Activated CD4-positive, alpha-beta T cell treated with anti-CD3 and anti-CD28 coated beads for 36 hours (primary cell): ENCODE measurements at regions of chr11 and their contacts with region 1.

Region 1: GRCh38 chr11:9137293-9138132 is 46.1 kb upstream of the SCUBE2 start:
- DNase-seq: peak; percentile 86
- ATAC-seq: peak; percentile 88
- H3K4me3 Mint-ChIP-seq: no peak overlapping the region
- H3K27ac Mint-ChIP-seq: peak overlapping the region; percentile 79
- H3K4me1 Mint-ChIP-seq: peaks cover 35% of the 10 kb centered on the region
- H3K27me3 Mint-ChIP-seq: no peaks in the 10 kb centered on the region

Region 2: DNA sequence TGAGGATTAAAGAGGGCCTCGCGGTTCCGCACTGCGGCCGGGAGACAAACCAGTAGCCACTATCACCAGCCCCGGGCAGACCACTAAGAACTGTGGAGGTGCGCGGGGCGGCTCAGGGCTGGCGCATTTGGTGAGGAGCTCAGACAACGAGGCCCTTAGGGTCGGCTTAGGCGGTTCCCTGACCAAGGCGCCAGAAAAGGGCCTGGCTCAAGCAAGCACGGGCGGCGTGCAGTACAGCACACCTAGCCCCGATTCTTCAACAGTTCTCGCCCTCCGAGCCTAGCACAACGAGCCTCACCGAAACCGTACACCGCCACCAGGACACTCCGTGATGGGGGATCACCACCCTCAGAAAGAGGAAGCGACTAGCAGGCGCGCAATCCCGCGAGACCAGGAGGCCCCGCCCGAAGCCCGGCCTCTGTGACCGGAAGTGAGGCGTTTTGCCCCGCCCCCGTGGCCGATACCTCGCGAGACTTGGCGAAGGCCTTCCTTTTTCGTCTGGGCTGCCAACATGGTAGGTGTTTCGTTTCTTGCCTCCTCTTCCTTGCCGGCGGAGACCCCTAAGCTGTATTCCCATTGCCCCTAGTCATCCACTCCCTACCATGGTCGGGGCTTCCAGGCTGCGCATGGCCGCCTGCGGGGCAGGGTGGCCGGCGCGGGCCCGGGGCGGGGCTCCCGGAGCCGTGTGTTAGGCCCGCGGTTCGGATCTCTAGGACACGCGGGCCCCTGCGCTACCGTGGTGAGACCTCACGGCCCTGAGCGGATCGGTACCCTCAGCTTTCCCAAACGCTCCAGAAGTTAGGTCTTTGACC is 455.0 kb before region 1 on chr11 and contains the starts of genes RPL27A and TRIM66:
- CTCF ChIA-PET with region 1: no interaction called
- POLR2A ChIA-PET with region 1: no interaction called
- intact Hi-C with region 1: loop called (anchors 5 to 10 kb)
- DNase-seq: peak; percentile 99
- ATAC-seq: peak; percentile 96
- H3K4me3 Mint-ChIP-seq: peak within 1 kb of the TSS; percentile 97
- H3K27ac Mint-ChIP-seq: peak within 1 kb of the TSS; percentile 98
- H3K4me1 Mint-ChIP-seq: peaks cover 46% of the 10 kb centered on the region
- H3K27me3 Mint-ChIP-seq: no peaks in the 10 kb centered on the region
- total RNA-seq, gene RPL27A: 688 to 1,021 TPM
- total RNA-seq, gene TRIM66: 18.3 to 19.5 TPM

Region 3: DNA sequence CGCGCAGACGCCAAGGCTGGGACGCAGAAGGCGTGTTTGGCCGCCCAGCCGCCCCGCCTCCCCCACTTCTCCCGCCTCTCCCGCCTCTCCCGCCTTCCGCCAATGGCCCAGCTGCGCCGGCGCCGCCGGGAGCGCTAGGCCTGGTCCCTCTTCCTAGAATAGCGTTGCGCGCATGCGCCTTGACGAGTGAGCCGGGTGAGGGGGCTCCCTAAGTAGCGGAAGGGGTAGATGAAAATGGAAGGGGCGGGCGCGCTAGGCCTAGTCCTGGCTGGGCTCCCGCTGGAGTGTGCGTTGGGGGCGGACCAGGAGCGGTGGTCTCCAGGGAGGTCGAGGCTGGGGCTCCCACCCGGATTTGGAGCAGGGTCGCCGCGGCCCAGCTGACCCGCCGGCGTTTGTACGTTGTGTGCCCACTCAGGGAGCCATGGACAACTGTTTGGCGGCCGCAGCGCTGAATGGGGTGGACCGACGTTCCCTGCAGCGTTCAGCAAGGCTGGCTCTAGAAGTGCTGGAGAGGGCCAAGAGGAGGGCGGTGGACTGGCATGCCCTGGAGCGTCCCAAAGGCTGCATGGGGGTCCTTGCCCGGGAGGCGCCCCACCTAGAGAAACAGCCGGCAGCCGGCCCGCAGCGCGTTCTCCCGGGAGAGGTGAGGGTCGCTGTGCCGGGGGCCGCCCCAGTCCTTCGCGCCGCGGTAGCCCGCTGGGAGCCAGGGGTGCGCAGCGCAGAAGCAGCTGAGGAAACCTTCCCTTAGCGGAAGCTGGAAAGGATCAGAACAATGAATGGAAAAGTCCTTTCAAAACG is 226.3 kb before region 1 on chr11 and contains the start of gene AKIP1:
- CTCF ChIA-PET with region 1: interaction called, 27 read pairs
- POLR2A ChIA-PET with region 1: no interaction called
- intact Hi-C with region 1: loop called (anchors 1 kb)
- DNase-seq: peak; percentile 94
- ATAC-seq: peak; percentile 76
- H3K4me3 Mint-ChIP-seq: peak within 1 kb of the TSS; percentile 86
- H3K27ac Mint-ChIP-seq: peak within 1 kb of the TSS; percentile 89
- H3K4me1 Mint-ChIP-seq: peaks cover 45% of the 10 kb centered on the region
- H3K27me3 Mint-ChIP-seq: peaks cover 6% of the 10 kb centered on the region
- total RNA-seq, gene AKIP1: 29.8 to 32.2 TPM

Region 4: DNA sequence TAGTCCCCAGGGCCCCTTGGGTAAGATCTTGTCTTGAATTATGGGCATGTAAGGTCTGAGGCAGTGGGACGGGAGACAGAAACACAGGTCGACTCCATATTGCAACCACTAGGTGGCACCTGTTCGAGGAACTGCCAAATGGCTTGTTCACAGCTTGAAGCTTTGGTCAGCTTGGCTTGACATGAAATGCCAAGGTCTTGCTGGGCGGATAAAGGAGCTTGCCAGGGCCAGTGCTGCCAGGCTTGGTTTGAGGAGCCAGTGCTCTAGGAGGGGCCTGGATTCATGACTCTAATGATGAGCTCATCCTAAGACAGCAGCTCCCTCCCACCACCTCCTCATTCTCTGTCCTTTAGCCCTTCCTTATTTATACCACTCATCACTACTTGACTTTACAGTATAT is 121.8 kb before region 1 on chr11:
- CTCF ChIA-PET with region 1: interaction called, 124 read pairs
- POLR2A ChIA-PET with region 1: interaction called, 4 read pairs
- intact Hi-C with region 1: loop called (anchors 1 kb)
- DNase-seq: peak; percentile 72
- ATAC-seq: peak; percentile 93
- H3K4me3 Mint-ChIP-seq: no peak overlapping the region
- H3K27ac Mint-ChIP-seq: no peak overlapping the region
- H3K4me1 Mint-ChIP-seq: peaks cover 19% of the 10 kb centered on the region
- H3K27me3 Mint-ChIP-seq: peaks cover 10% of the 10 kb centered on the region

Region 5: GRCh38 chr11:9092853-9093778 is 44.4 kb before region 1 on chr11:
- CTCF ChIA-PET with region 1: interaction called, 11 read pairs
- POLR2A ChIA-PET with region 1: no interaction called
- intact Hi-C with region 1: no loop called
- DNase-seq: no peak
- ATAC-seq: no peak
- H3K4me3 Mint-ChIP-seq: no peak overlapping the region
- H3K27ac Mint-ChIP-seq: no peak overlapping the region
- H3K4me1 Mint-ChIP-seq: no peaks in the 10 kb centered on the region
- H3K27me3 Mint-ChIP-seq: peaks cover 54% of the 10 kb centered on the region

Region 6: GRCh38 chr11:9150501-9150900 is 13.0 kb after region 1 on chr11:
- CTCF ChIA-PET with region 1: interaction called, 16 read pairs
- POLR2A ChIA-PET with region 1: no interaction called
- intact Hi-C with region 1: no loop called
- DNase-seq: no peak
- ATAC-seq: no peak
- H3K4me3 Mint-ChIP-seq: no peak overlapping the region
- H3K27ac Mint-ChIP-seq: no peak overlapping the region
- H3K4me1 Mint-ChIP-seq: peaks cover 7% of the 10 kb centered on the region
- H3K27me3 Mint-ChIP-seq: no peaks in the 10 kb centered on the region